BJ (cell line): ENCODE measurements at regions of chr12 and their contacts with region 1.

Region 1: DNA sequence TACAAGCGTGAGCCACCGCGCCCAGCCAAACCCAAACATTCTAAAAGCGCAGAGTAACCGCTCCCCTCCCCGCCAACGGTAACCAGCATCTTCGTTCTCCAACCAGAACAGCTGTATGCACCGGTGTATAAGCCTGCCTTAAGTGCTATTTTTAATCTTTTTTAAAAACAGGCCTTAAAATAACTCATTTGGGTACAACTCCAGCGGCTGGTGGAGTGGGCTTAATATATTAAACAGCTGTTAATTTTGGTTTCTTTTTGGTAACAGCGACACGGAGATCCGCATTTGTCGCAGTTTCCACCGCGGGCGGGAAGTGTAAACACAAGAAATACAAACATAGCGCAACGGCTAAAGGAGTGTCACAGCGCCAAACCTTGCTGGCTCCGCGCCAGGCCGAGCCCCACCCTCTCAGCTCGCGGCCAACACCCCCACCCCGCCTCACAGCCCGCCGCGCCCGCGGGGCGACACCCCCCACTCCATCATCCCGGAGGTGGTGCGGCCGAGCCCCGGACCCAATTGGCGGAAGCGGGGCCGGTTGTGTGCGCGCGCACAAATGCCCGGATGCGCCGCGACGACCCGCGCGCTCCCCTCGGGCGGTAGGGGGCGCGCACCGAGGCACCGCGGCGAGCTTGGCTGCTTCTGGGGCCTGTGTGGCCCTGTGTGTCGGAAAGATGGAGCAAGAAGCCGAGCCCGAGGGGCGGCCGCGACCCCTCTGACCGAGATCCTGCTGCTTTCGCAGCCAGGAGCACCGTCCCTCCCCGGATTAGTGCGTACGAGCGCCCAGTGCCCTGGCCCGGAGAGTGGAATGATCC is at the start of gene MDM2:
- DNase-seq: peak; percentile 41
- H3K4me3 ChIP-seq: peak within 1 kb of the TSS; percentile 100
- H3K27me3 ChIP-seq: no peaks in the 10 kb centered on the region
- CTCF ChIP-seq: peak; percentile 62
- polyA plus RNA-seq, gene MDM2: 15.1 and 34.6 TPM in 2 replicates

Region 2: GRCh38 chr12:68776976-68777610 is 30.7 kb before region 1 on chr12:
- CTCF ChIA-PET with region 1: no interaction called
- POLR2A ChIA-PET with region 1: no interaction called
- DNase-seq: no peak
- H3K4me3 ChIP-seq: no peak overlapping the region
- H3K27me3 ChIP-seq: no peaks in the 10 kb centered on the region
- CTCF ChIP-seq: no peak

Region 3: GRCh38 chr12:68796399-68796798 is 11.4 kb before region 1 on chr12:
- CTCF ChIA-PET with region 1: interaction called, 16 read pairs
- POLR2A ChIA-PET with region 1: no interaction called
- DNase-seq: no peak
- H3K4me3 ChIP-seq: no peak overlapping the region
- H3K27me3 ChIP-seq: no peaks in the 10 kb centered on the region
- CTCF ChIP-seq: no peak

Region 4: GRCh38 chr12:68837215-68837614 is 29.4 kb after region 1 on chr12:
- CTCF ChIA-PET with region 1: interaction called, 3 read pairs
- POLR2A ChIA-PET with region 1: interaction called, 14 read pairs
- DNase-seq: no peak
- H3K4me3 ChIP-seq: no peak overlapping the region
- H3K27me3 ChIP-seq: no peaks in the 10 kb centered on the region
- CTCF ChIP-seq: no peak

Region 5: DNA sequence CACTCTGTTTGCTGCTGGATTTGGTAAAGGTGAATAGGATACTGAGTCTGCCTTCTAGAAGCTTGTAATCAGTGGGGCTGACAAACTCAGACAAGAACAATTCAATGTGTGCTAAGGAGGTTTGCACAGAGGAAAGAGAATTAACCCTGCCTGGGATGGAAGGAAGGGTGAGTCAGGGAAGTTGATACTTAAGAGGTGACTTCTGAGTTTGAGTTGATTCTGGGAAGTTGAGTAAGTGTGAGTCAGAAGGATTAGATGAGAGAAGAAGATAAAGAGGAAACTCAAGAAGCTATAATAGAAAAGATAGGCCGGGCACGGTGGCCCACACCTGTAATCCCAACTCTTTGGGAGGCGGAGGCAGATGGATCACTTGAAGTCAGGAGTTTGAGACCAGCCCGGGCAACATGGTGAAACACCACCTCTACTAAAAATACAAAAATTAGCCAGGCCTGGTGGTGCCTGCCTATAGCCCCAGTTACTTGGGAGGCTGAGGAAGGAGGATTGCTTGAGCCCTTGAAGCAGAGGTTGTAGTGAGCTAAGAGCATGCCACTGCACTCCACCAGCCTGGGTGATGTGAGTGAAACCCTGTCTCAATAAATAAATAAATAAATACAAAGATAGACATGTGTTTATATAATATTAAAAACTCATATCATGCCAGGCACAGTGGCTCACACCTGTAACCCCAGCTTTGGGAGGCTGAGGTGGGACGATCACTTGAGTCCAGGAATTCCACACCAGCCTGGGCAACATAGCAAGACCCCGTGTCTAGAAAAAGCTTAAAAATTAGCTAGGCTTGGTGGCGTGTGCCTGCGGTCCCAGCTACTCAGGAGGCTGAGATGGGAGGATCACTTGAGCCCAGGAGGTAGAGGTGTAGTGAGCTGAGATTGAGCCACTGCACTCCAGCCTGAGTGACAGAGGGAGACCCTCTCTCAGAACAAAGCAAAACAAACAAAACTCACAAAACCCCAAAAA is 252.0 kb after region 1 on chr12:
- CTCF ChIA-PET with region 1: no interaction called
- POLR2A ChIA-PET with region 1: no interaction called
- DNase-seq: peak; percentile 70
- H3K4me3 ChIP-seq: no peak overlapping the region
- H3K27me3 ChIP-seq: no peaks in the 10 kb centered on the region
- CTCF ChIP-seq: no peak